ENCODE measurements at regions of chr1 and their contacts with region 1.

Region 1: DNA sequence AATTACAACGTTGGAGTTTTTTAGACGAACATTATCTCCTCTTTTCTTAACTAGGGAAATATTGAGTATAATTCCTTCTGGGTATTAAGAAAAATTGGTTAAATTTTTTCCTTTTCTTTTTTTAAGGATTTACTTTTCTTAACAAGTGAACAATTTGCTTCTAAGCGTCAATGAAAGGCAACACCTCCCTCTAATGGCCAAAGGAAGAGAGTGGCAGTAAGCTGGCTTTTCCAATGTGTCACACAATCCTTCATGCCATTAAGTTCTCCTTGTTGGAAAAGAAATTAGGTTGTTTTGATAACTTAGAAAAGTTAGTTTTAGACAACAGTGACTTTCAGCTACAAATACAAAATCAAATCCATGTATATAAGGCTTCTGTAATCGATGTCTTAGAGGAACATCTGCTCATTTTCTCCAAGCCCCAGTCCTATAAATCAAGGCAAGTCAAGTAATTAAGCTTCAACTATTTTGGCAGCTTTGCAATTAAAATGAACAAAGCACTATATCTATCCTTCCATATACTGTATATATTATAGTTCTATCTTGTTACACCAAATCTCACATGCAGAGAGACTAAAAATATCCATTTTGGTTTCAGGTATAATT is 62.8 kb downstream of the EDEM3 start:
- DNase-seq: peak; percentile 68
- ATAC-seq: peak; percentile 47; the same call in 1 of the 2 replicates
- H3K4me3 ChIP-seq: no peak overlapping the region
- H3K27ac ChIP-seq: no peak overlapping the region
- H3K4me1 ChIP-seq: peaks cover 3% of the 10 kb centered on the region; the same call in 1 of the 2 replicates
- H3K27me3 ChIP-seq: no peaks in the 10 kb centered on the region
- CTCF ChIP-seq: peak; percentile 78
- POLR2A ChIP-seq: no peak
- RAD21 ChIP-seq: peak; percentile 78

Region 2: GRCh38 chr1:184075055-184076029 is 616.5 kb before region 1 on chr1:
- CTCF ChIA-PET with region 1: no interaction called
- POLR2A ChIA-PET with region 1: no interaction called
- dilution Hi-C with region 1: no loop called
- in situ Hi-C with region 1: no loop called
- intact Hi-C with region 1: loop called (anchors 1 kb)
- DNase-seq: peak; percentile 75
- ATAC-seq: peak; percentile 87
- H3K4me3 ChIP-seq: no peak overlapping the region
- H3K27ac ChIP-seq: no peak overlapping the region
- H3K4me1 ChIP-seq: peaks cover 3% of the 10 kb centered on the region; the same call in 1 of the 2 replicates
- H3K27me3 ChIP-seq: no peaks in the 10 kb centered on the region
- CTCF ChIP-seq: peak; percentile 91
- POLR2A ChIP-seq: peak; percentile 26; the same call in 1 of the 2 replicates
- RAD21 ChIP-seq: peak; percentile 98

Region 3: DNA sequence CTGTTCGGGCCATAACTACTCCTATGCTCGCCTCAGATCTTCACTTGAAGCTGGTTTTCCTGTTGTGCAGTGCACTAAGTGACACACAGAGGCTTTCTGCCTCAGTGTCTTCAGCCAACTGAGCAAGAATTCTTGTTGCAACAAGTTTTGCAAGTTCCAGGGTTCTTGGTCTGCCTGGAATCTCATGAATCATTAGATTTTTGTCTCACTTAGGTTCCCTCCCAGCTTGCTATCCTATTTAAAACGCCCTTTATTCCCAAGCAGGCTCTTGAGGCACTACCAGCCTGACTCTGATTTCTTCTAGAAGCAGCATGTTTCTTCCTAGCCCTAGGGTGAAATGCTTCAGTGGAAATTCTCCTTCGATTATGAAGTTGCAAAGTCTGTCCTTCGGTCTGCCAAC is 146.2 kb before region 1 on chr1:
- CTCF ChIA-PET with region 1: no interaction called
- POLR2A ChIA-PET with region 1: no interaction called
- dilution Hi-C with region 1: no loop called
- in situ Hi-C with region 1: no loop called
- intact Hi-C with region 1: no loop called
- DNase-seq: peak; percentile 52
- ATAC-seq: peak; percentile 75
- H3K4me3 ChIP-seq: no peak overlapping the region
- H3K27ac ChIP-seq: no peak overlapping the region
- H3K4me1 ChIP-seq: no peaks in the 10 kb centered on the region
- H3K27me3 ChIP-seq: no peaks in the 10 kb centered on the region
- CTCF ChIP-seq: no peak
- POLR2A ChIP-seq: no peak
- RAD21 ChIP-seq: no peak

Region 4: DNA sequence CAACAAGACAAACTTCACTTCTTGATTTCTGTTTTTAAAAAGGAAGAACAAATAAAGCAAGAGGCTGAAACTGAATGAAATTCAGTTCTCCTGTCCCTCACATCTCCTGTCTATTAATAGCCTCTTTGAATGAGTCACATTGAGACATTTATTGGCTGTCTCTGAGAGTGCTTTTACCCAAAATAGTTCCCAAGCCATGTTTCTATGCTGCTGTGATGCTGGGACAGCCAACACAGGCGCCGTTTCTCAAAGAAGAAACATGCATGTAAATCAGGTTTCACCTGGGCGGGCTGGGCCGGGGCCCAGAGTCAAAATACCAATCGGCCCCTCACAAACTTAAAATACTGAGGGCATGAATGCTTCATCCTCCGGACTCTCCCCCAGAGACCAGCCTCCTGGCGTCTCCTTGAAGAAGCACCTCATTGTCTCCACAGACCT is 42.4 kb before region 1 on chr1:
- CTCF ChIA-PET with region 1: no interaction called
- POLR2A ChIA-PET with region 1: no interaction called
- dilution Hi-C with region 1: no loop called
- in situ Hi-C with region 1: no loop called
- intact Hi-C with region 1: no loop called
- DNase-seq: peak; percentile 51
- ATAC-seq: no peak
- H3K4me3 ChIP-seq: no peak overlapping the region
- H3K27ac ChIP-seq: no peak overlapping the region
- H3K4me1 ChIP-seq: peaks cover 9% of the 10 kb centered on the region
- H3K27me3 ChIP-seq: 0 out of 2 replicates have a peak, but pooled peaks cover 2% of the 10 kb centered on the region
- CTCF ChIP-seq: no peak
- POLR2A ChIP-seq: no peak
- RAD21 ChIP-seq: no peak

Region 5: GRCh38 chr1:184910691-184911091 is 218.9 kb after region 1 on chr1:
- CTCF ChIA-PET with region 1: no interaction called
- POLR2A ChIA-PET with region 1: no interaction called
- dilution Hi-C with region 1: no loop called
- in situ Hi-C with region 1: no loop called
- intact Hi-C with region 1: no loop called
- DNase-seq: peak; percentile 28
- ATAC-seq: peak; percentile 54
- H3K4me3 ChIP-seq: no peak overlapping the region
- H3K27ac ChIP-seq: peak overlapping the region; percentile 10; the same call in 1 of the 2 replicates
- H3K4me1 ChIP-seq: peaks cover 6% of the 10 kb centered on the region
- H3K27me3 ChIP-seq: no peaks in the 10 kb centered on the region
- CTCF ChIP-seq: no peak
- POLR2A ChIP-seq: no peak
- RAD21 ChIP-seq: no peak